ENCODE measurements at regions of chr4 and their contacts with region 1.

Region 1: GRCh38 chr4:155953151-155954114 is at the start of gene CTSO:
- DNase-seq: peak; percentile 88
- H3K4me3 ChIP-seq: peak within 1 kb of the TSS; percentile 71 to 90 (median 80)
- H3K27ac ChIP-seq: peak within 1 kb of the TSS; percentile 96 to 99 (median 98)
- H3K4me1 ChIP-seq: peaks cover 0 to 25% (median 22%) of the 10 kb centered on the region in 4 donors
- H3K27me3 ChIP-seq: no peaks in the 10 kb centered on the region
- CTCF ChIP-seq: peak; percentile 41 to 61 (median 56)
- EP300 ChIP-seq: no peak
- POLR2A ChIP-seq: no peak
- total RNA-seq, gene CTSO: 26.0 to 41.4 (median 28.9) TPM

Region 2: DNA sequence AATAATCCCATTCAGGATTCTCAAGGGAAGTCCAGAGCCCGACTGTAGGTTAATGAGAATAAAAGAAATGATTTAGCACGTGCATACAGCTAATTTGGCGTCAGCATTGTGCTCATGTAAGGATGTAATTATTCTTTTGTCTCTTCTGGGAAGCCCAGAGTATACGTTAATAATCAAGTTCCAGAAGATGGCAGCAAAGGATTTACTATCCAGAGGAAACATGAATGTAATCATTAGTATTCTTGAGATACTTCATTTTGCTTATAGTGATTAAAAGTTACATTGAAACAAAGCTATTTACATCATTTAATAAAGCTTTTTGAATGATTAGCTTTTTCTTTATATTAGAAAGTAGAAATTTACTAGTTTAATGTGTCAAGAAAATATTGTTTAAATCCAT is 549.5 kb before region 1 on chr4:
- intact Hi-C with region 1: loop called (anchors 1 kb)
- DNase-seq: no peak
- H3K4me3 ChIP-seq: no peak overlapping the region
- H3K27ac ChIP-seq: no peak overlapping the region
- H3K4me1 ChIP-seq: peaks cover 0 to 24% (median 8%) of the 10 kb centered on the region in 4 donors
- H3K27me3 ChIP-seq: no peaks in the 10 kb centered on the region
- CTCF ChIP-seq: peak; percentile 10 to 44 (median 26)
- EP300 ChIP-seq: no peak
- POLR2A ChIP-seq: no peak

Region 3: GRCh38 chr4:155442267-155443105 is 510.9 kb before region 1 on chr4:
- intact Hi-C with region 1: loop called (anchors 2 kb)
- DNase-seq: peak; percentile 92
- H3K4me3 ChIP-seq: peak overlapping the region; percentile 7 to 32 (median 17)
- H3K27ac ChIP-seq: peak overlapping the region; percentile 45 to 59 (median 46)
- H3K4me1 ChIP-seq: peaks cover 0 to 15% (median 11%) of the 10 kb centered on the region in 4 donors
- H3K27me3 ChIP-seq: no peaks in the 10 kb centered on the region
- CTCF ChIP-seq: peak; percentile 78 to 95 (median 88)
- EP300 ChIP-seq: no peak
- POLR2A ChIP-seq: no peak

Region 4: DNA sequence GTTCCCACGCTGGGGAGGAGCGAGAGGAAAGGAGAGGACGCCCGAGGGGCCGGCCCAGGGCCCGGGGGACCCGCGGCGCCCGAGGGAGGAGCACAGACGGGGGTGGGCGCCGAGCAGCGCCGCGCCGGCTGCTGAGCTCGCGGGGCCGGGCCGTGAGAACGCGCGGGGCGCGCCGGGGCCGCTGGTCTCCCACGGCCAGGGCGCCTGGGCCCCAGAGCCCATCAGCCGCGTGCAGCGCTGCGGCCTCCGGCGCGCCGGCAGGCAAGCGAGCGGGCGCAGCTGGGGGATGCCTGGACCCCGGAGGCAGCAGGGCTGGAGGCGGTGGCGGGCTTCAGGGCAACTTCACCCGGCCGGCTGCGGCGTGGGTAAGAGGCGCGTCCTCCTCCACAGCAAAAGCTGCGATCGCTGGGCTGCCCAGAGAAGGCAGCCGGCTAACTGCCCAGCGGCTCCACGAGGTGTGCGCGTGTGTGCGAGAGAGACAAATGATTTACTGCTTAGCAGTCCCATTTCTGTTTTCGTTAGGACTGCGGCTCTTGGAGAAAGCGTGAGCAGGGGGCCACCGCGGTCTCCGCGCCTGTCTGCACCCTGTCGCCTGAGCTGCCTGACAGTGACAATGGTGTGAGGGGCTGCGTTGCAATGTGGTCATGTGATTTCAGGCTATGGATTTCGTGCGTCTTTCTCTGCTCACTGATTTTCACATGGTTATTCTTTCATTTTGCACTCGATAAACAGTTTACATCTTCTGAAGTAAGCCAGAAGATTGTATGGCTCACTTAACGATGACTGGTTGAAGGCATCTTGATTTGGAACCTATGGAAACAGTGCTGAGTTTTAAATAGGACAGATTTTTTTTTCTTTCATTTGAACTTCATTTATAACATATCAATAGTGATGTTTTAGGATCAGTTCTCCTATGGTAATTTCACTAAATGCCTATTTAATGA is 285.6 kb before region 1 on chr4:
- intact Hi-C with region 1: loop called (anchors 10 kb)
- DNase-seq: peak; percentile 88
- H3K4me3 ChIP-seq: peak overlapping the region; percentile 75 to 82 (median 80)
- H3K27ac ChIP-seq: peak overlapping the region; percentile 90 to 97 (median 94)
- H3K4me1 ChIP-seq: peaks cover 0 to 44% (median 24%) of the 10 kb centered on the region in 4 donors
- H3K27me3 ChIP-seq: no peaks in the 10 kb centered on the region
- CTCF ChIP-seq: no peak
- EP300 ChIP-seq: no peak
- POLR2A ChIP-seq: peak in 1 of 2 donors; percentile 50

Region 5: DNA sequence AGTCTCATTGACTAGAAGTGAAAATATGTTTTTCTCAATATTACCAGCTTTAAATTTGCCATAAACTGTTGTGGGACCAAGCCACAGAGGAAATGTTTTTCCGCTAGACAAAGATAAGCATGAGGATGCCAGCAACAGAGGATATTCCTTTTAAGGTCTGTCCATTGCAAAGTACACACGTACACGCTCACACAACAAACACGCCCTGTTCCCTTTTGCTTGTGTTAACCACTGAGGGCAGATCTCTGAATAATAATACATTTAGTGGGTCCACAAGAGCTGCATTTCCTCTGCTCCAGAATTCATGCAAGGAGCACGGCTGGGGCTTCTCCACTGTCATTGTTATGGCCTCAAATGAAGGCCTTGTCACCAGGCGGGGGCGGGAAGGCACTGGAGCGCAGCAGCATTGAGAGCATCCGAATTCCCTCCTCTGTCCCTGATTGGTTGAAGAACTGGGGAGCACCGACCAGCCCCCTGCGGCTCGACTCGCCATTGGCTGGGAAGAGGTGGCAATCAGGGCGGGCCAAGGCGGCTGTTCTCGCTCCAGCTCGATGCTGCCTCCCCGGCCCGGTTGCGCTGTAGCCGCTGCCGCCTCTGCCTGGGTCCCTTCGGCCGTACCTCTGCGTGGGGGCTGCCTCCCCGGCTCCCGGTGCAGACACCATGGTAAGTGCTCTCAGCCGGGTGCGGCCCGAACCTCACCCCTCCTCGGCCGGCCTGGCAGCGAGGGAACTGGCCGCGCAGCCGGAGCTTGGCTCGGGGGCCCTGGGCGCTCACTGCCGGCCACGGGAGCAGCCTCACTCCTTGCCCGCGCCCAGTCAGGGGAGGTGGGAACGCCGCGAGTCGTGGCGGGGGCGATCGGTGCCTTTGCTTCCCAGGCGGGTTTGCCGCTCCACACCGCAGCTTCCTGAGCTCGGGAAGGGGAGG is 194.7 kb before region 1 on chr4 and contains the start of gene GUCY1B1:
- intact Hi-C with region 1: loop called (anchors 5 kb)
- DNase-seq: peak; percentile 98
- H3K4me3 ChIP-seq: peak within 1 kb of the TSS; percentile 84 to 95 (median 93)
- H3K27ac ChIP-seq: peak within 1 kb of the TSS; percentile 94 to 97 (median 95)
- H3K4me1 ChIP-seq: peaks cover 0 to 42% (median 22%) of the 10 kb centered on the region in 4 donors
- H3K27me3 ChIP-seq: no peaks in the 10 kb centered on the region
- CTCF ChIP-seq: peak; percentile 27 to 46 (median 40)
- EP300 ChIP-seq: no peak
- POLR2A ChIP-seq: peak; percentile 20 to 38
- total RNA-seq, gene GUCY1B1: 45.1 to 115 (median 80.1) TPM

Region 6: GRCh38 chr4:155809835-155810234 is 143.6 kb before region 1 on chr4:
- intact Hi-C with region 1: loop called (anchors 2 kb)
- DNase-seq: no peak
- H3K4me3 ChIP-seq: no peak overlapping the region
- H3K27ac ChIP-seq: peak overlapping the region in 3 of 4 donors; percentile 8 to 75 (median 69)
- H3K4me1 ChIP-seq: peaks cover 0 to 34% (median 24%) of the 10 kb centered on the region in 4 donors
- H3K27me3 ChIP-seq: no peaks in the 10 kb centered on the region
- CTCF ChIP-seq: peak; percentile 25 to 62 (median 49)
- EP300 ChIP-seq: no peak
- POLR2A ChIP-seq: no peak

Region 7: DNA sequence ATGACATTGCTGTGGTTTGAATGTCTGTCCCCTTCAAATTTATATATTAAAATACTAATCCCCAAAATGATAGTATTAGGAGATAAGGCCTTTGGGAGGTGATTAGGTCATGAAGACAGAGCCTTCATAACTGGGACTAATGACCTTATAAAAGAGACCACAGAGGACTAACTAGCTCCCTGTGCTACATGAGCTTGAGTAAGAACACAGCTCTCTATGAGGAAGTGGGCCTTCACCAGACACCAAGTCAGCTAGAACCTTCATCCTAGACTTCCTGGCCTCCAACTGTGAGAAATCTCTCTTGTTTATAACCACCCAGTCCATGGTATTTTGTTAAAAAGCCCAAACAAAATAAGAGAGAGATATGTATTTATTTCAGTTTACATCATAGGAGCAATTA is 242.5 kb after region 1 on chr4:
- intact Hi-C with region 1: no loop called
- DNase-seq: no peak
- H3K4me3 ChIP-seq: no peak overlapping the region
- H3K27ac ChIP-seq: no peak overlapping the region
- H3K4me1 ChIP-seq: peaks cover 0 to 17% (median 2%) of the 10 kb centered on the region in 4 donors
- H3K27me3 ChIP-seq: no peaks in the 10 kb centered on the region
- CTCF ChIP-seq: no peak
- EP300 ChIP-seq: no peak
- POLR2A ChIP-seq: no peak

Region 8: GRCh38 chr4:156388826-156389225 is 435.4 kb after region 1 on chr4:
- intact Hi-C with region 1: no loop called
- DNase-seq: no peak
- H3K4me3 ChIP-seq: no peak overlapping the region
- H3K27ac ChIP-seq: no peak overlapping the region
- H3K4me1 ChIP-seq: peaks cover 0 to 5% (median 0%) of the 10 kb centered on the region in 4 donors
- H3K27me3 ChIP-seq: no peaks in the 10 kb centered on the region
- CTCF ChIP-seq: no peak
- EP300 ChIP-seq: no peak
- POLR2A ChIP-seq: no peak

Region 9: GRCh38 chr4:156968479-156968984 is 1015.1 kb after region 1 on chr4:
- intact Hi-C with region 1: loop called (anchors 5 kb)
- DNase-seq: peak; percentile 82
- H3K4me3 ChIP-seq: peak overlapping the region; percentile 4 to 90 (median 87)
- H3K27ac ChIP-seq: peak overlapping the region; percentile 90 to 94 (median 92)
- H3K4me1 ChIP-seq: peaks cover 0 to 48% (median 30%) of the 10 kb centered on the region in 4 donors
- H3K27me3 ChIP-seq: no peaks in the 10 kb centered on the region
- CTCF ChIP-seq: peak; percentile 56 to 85 (median 79)
- EP300 ChIP-seq: no peak
- POLR2A ChIP-seq: no peak

Measured in sigmoid colon (tissue), 7 donors.